Stomach (tissue), 19 donors: ENCODE measurements at regions of chr10 and their contacts with region 1.

Region 1: GRCh38 chr10:26721561-26721960 is 24.1 kb downstream of the PDSS1 start:
- DNase-seq: peak in 1 of 2 donors; percentile 32
- H3K4me3 ChIP-seq: no peak overlapping the region
- H3K27ac ChIP-seq: no peak overlapping the region
- H3K4me1 ChIP-seq: no peaks in the 10 kb centered on the region
- H3K27me3 ChIP-seq: no peaks in the 10 kb centered on the region
- CTCF ChIP-seq: no peak
- EP300 ChIP-seq: no peak
- POLR2A ChIP-seq: no peak

Region 2: GRCh38 chr10:26799342-26799741 is 77.8 kb after region 1 on chr10:
- intact Hi-C with region 1: no loop called
- DNase-seq: peak in 1 of 2 donors; percentile 57
- H3K4me3 ChIP-seq: no peak overlapping the region
- H3K27ac ChIP-seq: no peak overlapping the region
- H3K4me1 ChIP-seq: peaks cover 6 to 33% (median 21%) of the 10 kb centered on the region in 4 donors
- H3K27me3 ChIP-seq: no peaks in the 10 kb centered on the region
- CTCF ChIP-seq: no peak
- EP300 ChIP-seq: no peak
- POLR2A ChIP-seq: no peak

Region 3: GRCh38 chr10:26887611-26888188 is 166.1 kb after region 1 on chr10:
- intact Hi-C with region 1: loop called (anchors 5 kb)
- DNase-seq: no peak
- H3K4me3 ChIP-seq: no peak overlapping the region
- H3K27ac ChIP-seq: no peak overlapping the region
- H3K4me1 ChIP-seq: no peaks in the 10 kb centered on the region
- H3K27me3 ChIP-seq: peaks cover 0 to 23% (median 3%) of the 10 kb centered on the region in 3 donors
- CTCF ChIP-seq: no peak
- EP300 ChIP-seq: no peak
- POLR2A ChIP-seq: no peak